Calu3 (cell line): ENCODE measurements at regions of chr14 and their contacts with region 1.

Region 1: GRCh38 chr14:29548948-29549370 is 378.7 kb downstream of the PRKD1 start:
- DNase-seq: peak; percentile 8
- H3K4me3 Mint-ChIP-seq: no peak overlapping the region
- H3K27ac Mint-ChIP-seq: no peak overlapping the region
- H3K4me1 Mint-ChIP-seq: no peaks in the 10 kb centered on the region
- H3K27me3 Mint-ChIP-seq: no peaks in the 10 kb centered on the region
- CTCF ChIP-seq: peak; percentile 44

Region 2: GRCh38 chr14:29178971-29179370 is 370.0 kb before region 1 on chr14:
- CTCF ChIA-PET with region 1: no interaction called
- intact Hi-C with region 1: no loop called
- DNase-seq: no peak
- H3K4me3 Mint-ChIP-seq: no peak overlapping the region
- H3K27ac Mint-ChIP-seq: no peak overlapping the region
- H3K4me1 Mint-ChIP-seq: no peaks in the 10 kb centered on the region
- H3K27me3 Mint-ChIP-seq: no peaks in the 10 kb centered on the region
- CTCF ChIP-seq: no peak

Region 3: DNA sequence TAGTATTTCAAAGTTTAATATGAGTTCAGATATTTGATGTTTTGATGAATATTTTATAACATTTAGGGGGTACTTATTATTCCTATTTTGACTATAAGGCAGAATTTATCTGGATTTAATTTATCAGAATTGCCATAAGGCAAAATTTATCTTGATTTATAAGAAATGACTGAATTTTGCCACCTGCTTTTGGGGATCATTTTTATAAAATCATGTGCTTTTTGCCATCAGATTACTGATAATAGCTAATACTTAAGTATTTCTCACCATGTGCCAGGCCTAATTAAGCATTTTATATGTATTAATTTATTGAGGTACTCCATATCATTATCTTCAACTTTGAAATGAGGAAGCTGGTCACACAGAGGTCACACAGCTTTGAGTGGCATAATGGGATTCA is 45.1 kb before region 1 on chr14:
- CTCF ChIA-PET with region 1: no interaction called
- intact Hi-C with region 1: no loop called
- DNase-seq: no peak
- H3K4me3 Mint-ChIP-seq: no peak overlapping the region
- H3K27ac Mint-ChIP-seq: no peak overlapping the region
- H3K4me1 Mint-ChIP-seq: no peaks in the 10 kb centered on the region
- H3K27me3 Mint-ChIP-seq: no peaks in the 10 kb centered on the region
- CTCF ChIP-seq: no peak

Region 4: GRCh38 chr14:29643433-29644211 is 94.7 kb after region 1 on chr14:
- CTCF ChIA-PET with region 1: no interaction called
- intact Hi-C with region 1: loop called (anchors 5 kb)
- DNase-seq: no peak
- H3K4me3 Mint-ChIP-seq: no peak overlapping the region
- H3K27ac Mint-ChIP-seq: no peak overlapping the region
- H3K4me1 Mint-ChIP-seq: peaks cover 32% of the 10 kb centered on the region
- H3K27me3 Mint-ChIP-seq: no peaks in the 10 kb centered on the region
- CTCF ChIP-seq: no peak

Region 5: GRCh38 chr14:29759521-29760340 is 210.8 kb after region 1 on chr14:
- CTCF ChIA-PET with region 1: no interaction called
- intact Hi-C with region 1: loop called (anchors 5 kb)
- DNase-seq: no peak
- H3K4me3 Mint-ChIP-seq: no peak overlapping the region
- H3K27ac Mint-ChIP-seq: no peak overlapping the region
- H3K4me1 Mint-ChIP-seq: peaks cover 21% of the 10 kb centered on the region
- H3K27me3 Mint-ChIP-seq: no peaks in the 10 kb centered on the region
- CTCF ChIP-seq: no peak

Region 6: GRCh38 chr14:29930283-29930682 is 381.3 kb after region 1 on chr14:
- CTCF ChIA-PET with region 1: no interaction called
- intact Hi-C with region 1: loop called (anchors 5 kb)
- DNase-seq: no peak
- H3K4me3 Mint-ChIP-seq: no peak overlapping the region
- H3K27ac Mint-ChIP-seq: peak overlapping the region; percentile 32
- H3K4me1 Mint-ChIP-seq: peaks cover 24% of the 10 kb centered on the region
- H3K27me3 Mint-ChIP-seq: no peaks in the 10 kb centered on the region
- CTCF ChIP-seq: no peak

Region 7: DNA sequence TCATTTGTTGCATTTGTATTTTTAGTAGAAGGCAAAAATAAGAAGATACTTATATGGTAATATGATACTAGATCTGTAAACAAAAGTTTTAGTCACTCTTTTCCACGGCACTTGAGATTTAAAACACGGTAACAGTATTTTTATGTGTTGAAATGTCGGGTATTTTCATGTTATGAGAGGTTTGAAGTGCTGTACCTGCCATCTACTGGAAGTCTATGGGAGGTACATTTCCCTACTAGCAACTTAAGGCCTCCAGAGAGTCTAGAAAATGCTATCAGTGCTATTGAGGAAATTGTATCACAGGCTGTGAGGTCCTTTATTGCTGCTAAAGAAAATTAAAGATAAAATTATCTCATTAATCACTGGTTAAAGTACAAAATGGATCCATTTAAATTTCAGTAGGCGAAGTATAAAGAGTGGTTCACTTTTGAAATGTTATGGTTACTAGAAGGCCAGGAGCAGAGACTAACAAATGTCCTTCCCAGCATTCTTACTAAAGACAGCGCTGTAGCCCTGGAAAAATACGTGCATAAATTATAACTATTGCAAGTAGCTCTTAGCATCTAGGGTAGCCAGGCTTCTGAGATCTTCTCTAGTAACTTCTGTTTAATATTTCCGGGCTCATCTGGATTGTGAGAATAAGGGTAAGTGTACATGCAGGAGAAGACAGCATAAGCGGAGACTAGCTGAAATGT is 456.3 kb after region 1 on chr14:
- CTCF ChIA-PET with region 1: interaction called, 5 read pairs
- intact Hi-C with region 1: loop called (anchors 1 kb)
- DNase-seq: peak; percentile 8
- H3K4me3 Mint-ChIP-seq: no peak overlapping the region
- H3K27ac Mint-ChIP-seq: no peak overlapping the region
- H3K4me1 Mint-ChIP-seq: no peaks in the 10 kb centered on the region
- H3K27me3 Mint-ChIP-seq: no peaks in the 10 kb centered on the region
- CTCF ChIP-seq: peak; percentile 41

Region 8: GRCh38 chr14:30214461-30215090 is 665.6 kb after region 1 on chr14:
- CTCF ChIA-PET with region 1: interaction called, 4 read pairs
- intact Hi-C with region 1: loop called (anchors 1 kb)
- DNase-seq: peak; percentile 32
- H3K4me3 Mint-ChIP-seq: no peak overlapping the region
- H3K27ac Mint-ChIP-seq: no peak overlapping the region
- H3K4me1 Mint-ChIP-seq: no peaks in the 10 kb centered on the region
- H3K27me3 Mint-ChIP-seq: no peaks in the 10 kb centered on the region
- CTCF ChIP-seq: peak; percentile 63

Region 9: DNA sequence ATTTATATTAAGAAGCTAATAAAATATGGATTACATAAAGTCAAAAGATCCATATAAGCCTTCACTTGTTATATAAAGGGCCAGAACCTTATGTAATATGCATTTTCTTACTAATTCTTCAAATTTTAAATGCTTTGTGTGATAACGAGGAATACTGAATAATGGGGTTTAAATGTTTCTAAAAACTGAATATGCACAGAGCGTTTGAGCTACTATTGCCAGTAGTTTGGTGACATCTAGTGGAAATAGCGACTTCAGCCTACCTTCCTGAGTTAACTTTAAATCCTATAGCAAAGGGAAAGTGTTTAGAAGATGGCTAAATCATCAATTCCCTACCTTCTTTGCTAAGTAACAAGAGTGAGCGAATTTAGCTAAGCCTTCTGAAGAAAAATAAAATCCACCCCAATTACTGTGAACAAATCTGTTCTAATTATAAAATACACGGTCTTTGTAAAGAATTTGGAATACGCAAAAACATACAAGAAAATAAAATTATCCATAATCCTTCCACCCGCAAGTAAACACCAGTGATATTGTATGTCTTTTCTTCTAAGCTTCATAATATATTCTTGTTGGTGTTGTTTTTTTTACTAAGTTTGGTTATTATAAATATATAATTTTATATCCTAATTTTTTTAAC is 894.5 kb after region 1 on chr14:
- CTCF ChIA-PET with region 1: no interaction called
- intact Hi-C with region 1: loop called (anchors 2 kb)
- DNase-seq: peak; percentile 7
- H3K4me3 Mint-ChIP-seq: no peak overlapping the region
- H3K27ac Mint-ChIP-seq: no peak overlapping the region
- H3K4me1 Mint-ChIP-seq: no peaks in the 10 kb centered on the region
- H3K27me3 Mint-ChIP-seq: peaks cover 22% of the 10 kb centered on the region
- CTCF ChIP-seq: no peak